ENCODE measurements at regions of chr16 and their contacts with region 1.

Region 1: GRCh38 chr16:14529010-14529669 is 100.9 kb downstream of the PARN start:
- DNase-seq: peak; percentile 24
- ATAC-seq: peak; percentile 65
- H3K4me3 Mint-ChIP-seq: no peak overlapping the region
- H3K27ac Mint-ChIP-seq: no peak overlapping the region
- H3K4me1 Mint-ChIP-seq: peaks cover 5% of the 10 kb centered on the region
- H3K27me3 Mint-ChIP-seq: no peaks in the 10 kb centered on the region
- CTCF ChIP-seq: no peak

Region 2: GRCh38 chr16:13928644-13929043 is 600.5 kb before region 1 on chr16:
- CTCF ChIA-PET with region 1: interaction called, 4 read pairs
- POLR2A ChIA-PET with region 1: no interaction called
- intact Hi-C with region 1: loop called (anchors 1 kb)
- DNase-seq: no peak
- ATAC-seq: no peak
- H3K4me3 Mint-ChIP-seq: no peak overlapping the region
- H3K27ac Mint-ChIP-seq: no peak overlapping the region
- H3K4me1 Mint-ChIP-seq: peaks cover 3% of the 10 kb centered on the region
- H3K27me3 Mint-ChIP-seq: no peaks in the 10 kb centered on the region
- CTCF ChIP-seq: no peak

Region 3: DNA sequence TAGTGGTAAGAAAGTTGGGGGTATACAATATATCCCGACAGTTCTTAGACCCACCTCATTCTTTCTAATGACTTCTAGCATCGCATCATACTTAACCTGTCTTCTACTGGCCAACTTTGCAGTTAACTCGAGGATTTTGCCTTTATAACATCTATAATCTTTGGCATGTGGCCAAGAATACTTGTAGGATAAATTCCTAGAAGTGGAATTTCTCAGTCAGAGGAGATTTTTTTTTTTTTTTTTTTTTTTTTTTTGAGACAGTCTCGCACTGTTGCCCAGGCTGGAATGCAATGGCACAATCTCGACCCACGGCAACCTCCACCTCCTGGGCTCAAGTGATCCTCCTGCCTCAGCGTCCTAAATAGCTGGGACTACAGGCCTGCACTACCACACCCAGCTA is 204.6 kb before region 1 on chr16:
- CTCF ChIA-PET with region 1: no interaction called
- POLR2A ChIA-PET with region 1: no interaction called
- intact Hi-C with region 1: no loop called
- DNase-seq: no peak
- ATAC-seq: no peak
- H3K4me3 Mint-ChIP-seq: no peak overlapping the region
- H3K27ac Mint-ChIP-seq: no peak overlapping the region
- H3K4me1 Mint-ChIP-seq: no peaks in the 10 kb centered on the region
- H3K27me3 Mint-ChIP-seq: peaks cover 6% of the 10 kb centered on the region
- CTCF ChIP-seq: no peak

Region 4: DNA sequence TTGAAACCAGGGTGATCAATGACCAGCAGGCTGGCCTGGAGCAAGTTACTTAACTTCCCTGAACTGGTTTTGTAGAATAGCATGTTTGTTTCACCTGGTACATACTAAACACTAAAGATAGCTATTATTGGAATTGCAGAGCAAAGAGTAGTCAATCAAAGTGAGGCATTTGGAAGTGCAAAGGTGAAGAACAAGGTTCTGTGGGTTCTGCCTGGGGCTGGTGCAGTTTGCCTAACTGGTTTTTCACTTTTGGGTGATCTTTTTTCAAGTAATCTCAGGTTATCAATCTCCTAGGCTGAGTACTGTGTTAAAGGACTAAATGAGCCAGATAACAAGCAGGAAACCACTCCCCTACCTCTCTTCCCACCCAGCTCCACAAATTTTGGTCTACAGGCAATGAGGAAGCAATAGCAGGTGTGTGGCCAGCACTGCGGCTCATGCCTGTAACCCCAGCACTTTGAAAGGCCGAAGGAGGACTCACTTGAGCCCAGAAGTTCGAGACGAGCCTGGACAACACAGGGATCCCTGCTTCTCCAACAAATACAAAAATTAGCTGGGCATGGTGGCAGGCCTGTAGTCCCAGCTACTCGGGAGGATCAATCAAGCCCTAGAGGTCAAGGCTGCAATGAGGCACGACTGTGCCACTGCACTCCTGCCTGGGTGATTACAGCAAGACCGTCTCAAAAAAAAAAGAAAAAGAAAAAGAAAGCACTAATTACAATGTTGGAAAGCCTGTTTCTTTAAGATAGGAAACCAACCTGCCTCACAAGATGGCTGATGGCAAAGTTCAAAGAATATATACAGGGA is 528.7 kb after region 1 on chr16:
- CTCF ChIA-PET with region 1: no interaction called
- POLR2A ChIA-PET with region 1: no interaction called
- intact Hi-C with region 1: no loop called
- DNase-seq: no peak
- ATAC-seq: no peak
- H3K4me3 Mint-ChIP-seq: no peak overlapping the region
- H3K27ac Mint-ChIP-seq: no peak overlapping the region
- H3K4me1 Mint-ChIP-seq: peaks cover 16% of the 10 kb centered on the region
- H3K27me3 Mint-ChIP-seq: no peaks in the 10 kb centered on the region
- CTCF ChIP-seq: no peak

Measured in activated B cell treated with CpG ODN at 0.5 μM for 24 hours (primary cell).